Left cardiac atrium (tissue), 4 donors: ENCODE measurements at regions of chr17 and their contacts with region 1.

Region 1: GRCh38 chr17:64155751-64156544 is 26.0 kb upstream of the ERN1 start:
- DNase-seq: peak; percentile 75
- ATAC-seq: peak; percentile 89 to 91

Region 2: DNA sequence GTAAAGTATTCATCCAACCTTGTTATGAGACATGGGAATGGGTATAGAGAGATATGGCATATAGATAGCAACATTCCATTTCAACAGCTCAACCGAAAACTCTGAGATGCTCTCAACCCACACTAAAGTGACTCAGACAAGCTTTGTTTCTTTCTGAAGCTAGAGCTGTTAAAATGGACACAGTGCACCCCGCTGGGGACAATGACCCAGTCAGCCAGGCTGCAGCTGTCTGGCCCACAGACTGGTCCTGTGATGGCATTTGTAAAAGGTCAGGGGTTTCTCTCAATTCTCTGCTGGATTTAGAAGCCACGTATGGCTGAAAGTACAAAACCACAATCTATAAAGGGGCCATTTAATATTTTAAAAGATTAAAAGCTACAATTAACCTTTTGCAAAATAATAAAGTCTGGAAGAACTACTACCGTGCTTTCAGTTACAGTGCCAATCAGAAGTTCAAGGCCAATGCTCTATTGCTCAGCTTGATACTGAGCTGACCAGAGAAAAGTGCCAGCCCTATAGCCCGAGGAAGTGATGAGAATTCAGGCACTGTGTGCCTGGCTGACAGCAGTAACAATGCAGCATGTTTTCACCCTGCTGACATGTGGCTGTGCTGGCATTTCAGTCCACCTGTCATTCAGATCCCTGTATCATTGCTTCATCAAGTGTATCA is 46.9 kb after region 1 on chr17:
- intact Hi-C with region 1: loop called in 1 of 2 experiments (anchors 10 kb)
- DNase-seq: no peak
- ATAC-seq: peak; percentile 48 to 69

Region 3: GRCh38 chr17:64262417-64263260 is 106.7 kb after region 1 on chr17 and contains the start of gene TEX2:
- intact Hi-C with region 1: loop called in 1 of 2 experiments (anchors 10 kb)
- DNase-seq: peak; percentile 64
- ATAC-seq: peak; percentile 53 to 55
- total RNA-seq, gene TEX2: 40.7 to 54.8 TPM